ENCODE measurements at regions of chr3 and their contacts with region 1.

Region 1: GRCh38 chr3:187016639-187017345 is 86.5 kb downstream of the ST6GAL1 start:
- DNase-seq: peak; percentile 92
- H3K4me3 ChIP-seq: no peak overlapping the region
- H3K27ac ChIP-seq: peak overlapping the region; percentile 43
- H3K4me1 ChIP-seq: peaks cover 59% of the 10 kb centered on the region
- H3K27me3 ChIP-seq: no peaks in the 10 kb centered on the region
- CTCF ChIP-seq: no peak
- POLR2A ChIP-seq: peak; percentile 27

Region 2: GRCh38 chr3:186871403-186871924 is 145.3 kb before region 1 on chr3:
- CTCF ChIA-PET with region 1: no interaction called
- POLR2A ChIA-PET with region 1: no interaction called
- dilution Hi-C with region 1: no loop called
- intact Hi-C with region 1: loop called (anchors 5 kb)
- DNase-seq: peak; percentile 94
- H3K4me3 ChIP-seq: peak overlapping the region in 1 of 3 experiments; percentile 2
- H3K27ac ChIP-seq: peak overlapping the region; percentile 65
- H3K4me1 ChIP-seq: peaks cover 34% of the 10 kb centered on the region
- H3K27me3 ChIP-seq: no peaks in the 10 kb centered on the region
- CTCF ChIP-seq: no peak
- POLR2A ChIP-seq: peak; percentile 38